ENCODE measurements at regions of chr14 and their contacts with region 1.

Region 1: GRCh38 chr14:76647697-76648298 is 113.5 kb upstream of the VASH1 start:
- DNase-seq: peak in 1 of 6 donors; percentile 27
- ATAC-seq: peak; percentile 58 to 90 (median 83)
- H3K4me3 ChIP-seq: no peak overlapping the region
- H3K27ac ChIP-seq: no peak overlapping the region
- H3K4me1 ChIP-seq: no peaks in the 10 kb centered on the region
- H3K27me3 ChIP-seq: no peaks in the 10 kb centered on the region
- CTCF ChIP-seq: peak; percentile 63 to 75 (median 72)

Region 2: GRCh38 chr14:76045773-76046172 is 602.0 kb before region 1 on chr14:
- intact Hi-C with region 1: loop called in 2 of 3 experiments (anchors 10 kb)
- DNase-seq: no peak
- ATAC-seq: no peak
- H3K4me3 ChIP-seq: no peak overlapping the region
- H3K27ac ChIP-seq: no peak overlapping the region
- H3K4me1 ChIP-seq: no peaks in the 10 kb centered on the region
- H3K27me3 ChIP-seq: no peaks in the 10 kb centered on the region
- CTCF ChIP-seq: no peak

Region 3: DNA sequence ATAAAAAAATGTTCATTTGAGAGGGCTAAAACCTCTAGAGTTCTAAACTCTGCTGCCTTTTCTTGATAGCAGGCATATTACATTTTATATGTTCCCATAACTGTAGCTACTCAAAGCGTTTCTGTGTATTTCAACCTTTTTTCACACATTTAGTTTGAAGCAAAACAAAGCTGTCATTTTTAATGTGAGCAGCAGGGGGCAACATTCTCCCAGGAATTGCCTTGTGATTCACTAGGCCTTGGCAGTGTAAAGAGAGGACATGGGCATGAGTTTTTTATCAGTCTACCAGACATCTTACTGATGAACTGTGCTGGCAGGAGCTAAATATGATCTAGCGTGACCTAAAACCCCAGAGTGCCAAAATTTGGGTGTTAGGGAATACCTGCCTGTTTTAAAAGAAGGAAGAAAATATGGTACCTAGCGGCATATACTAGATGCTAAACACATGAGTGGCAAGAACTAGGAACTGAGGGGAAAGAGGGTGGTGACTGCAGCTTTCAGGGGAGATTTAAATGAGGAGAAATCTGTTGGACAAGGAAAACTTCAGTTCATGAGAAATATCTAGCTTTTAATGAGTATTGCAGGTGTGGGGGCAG is 596.9 kb before region 1 on chr14:
- intact Hi-C with region 1: loop called in 2 of 3 experiments (anchors 10 kb)
- DNase-seq: peak in 3 of 6 donors; percentile 20 to 64 (median 26)
- ATAC-seq: peak; percentile 58 to 88 (median 84)
- H3K4me3 ChIP-seq: no peak overlapping the region
- H3K27ac ChIP-seq: no peak overlapping the region
- H3K4me1 ChIP-seq: no peaks in the 10 kb centered on the region
- H3K27me3 ChIP-seq: no peaks in the 10 kb centered on the region
- CTCF ChIP-seq: peak; percentile 49 to 70 (median 58)

Region 4: DNA sequence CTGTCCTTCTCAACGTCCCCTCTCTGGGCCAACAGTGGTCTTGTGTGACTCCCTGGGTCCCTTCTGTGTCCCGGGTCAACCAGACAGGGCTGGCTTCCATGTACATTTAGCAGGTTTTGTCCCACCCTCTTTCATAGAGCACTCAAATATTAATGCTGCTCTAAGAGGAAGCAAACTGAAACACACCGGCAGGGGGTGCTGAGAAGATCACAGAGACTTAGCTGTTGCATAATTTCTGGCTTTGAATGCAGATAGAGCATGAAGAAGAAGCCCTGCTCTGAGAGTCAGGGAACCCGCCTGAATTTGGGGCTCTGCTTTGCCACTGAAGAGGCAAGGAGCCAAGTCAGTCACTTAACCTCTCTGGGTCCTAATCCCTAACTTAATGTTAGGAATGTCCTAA is 133.2 kb before region 1 on chr14:
- intact Hi-C with region 1: loop called in 1 of 3 experiments (anchors 10 kb)
- DNase-seq: peak in 3 of 6 donors; percentile 8 to 35 (median 26)
- ATAC-seq: peak in 3 of 4 donors; percentile 48 to 59 (median 54)
- H3K4me3 ChIP-seq: no peak overlapping the region
- H3K27ac ChIP-seq: no peak overlapping the region
- H3K4me1 ChIP-seq: no peaks in the 10 kb centered on the region
- H3K27me3 ChIP-seq: no peaks in the 10 kb centered on the region
- CTCF ChIP-seq: peak in 3 of 4 donors; percentile 7 to 17 (median 13)